MCF 10A (cell line): ENCODE measurements at regions of chr5 and their contacts with region 1.

Region 1: GRCh38 chr5:168047043-168047668 is 244.3 kb upstream of the WWC1 start:
- DNase-seq: peak; percentile 89
- H3K4me3 Mint-ChIP-seq: no peak overlapping the region
- H3K27ac Mint-ChIP-seq: no peak overlapping the region
- H3K4me1 Mint-ChIP-seq: peaks cover 11% of the 10 kb centered on the region
- H3K27me3 Mint-ChIP-seq: peaks cover 34% of the 10 kb centered on the region
- CTCF ChIP-seq: peak; percentile 88

Region 2: DNA sequence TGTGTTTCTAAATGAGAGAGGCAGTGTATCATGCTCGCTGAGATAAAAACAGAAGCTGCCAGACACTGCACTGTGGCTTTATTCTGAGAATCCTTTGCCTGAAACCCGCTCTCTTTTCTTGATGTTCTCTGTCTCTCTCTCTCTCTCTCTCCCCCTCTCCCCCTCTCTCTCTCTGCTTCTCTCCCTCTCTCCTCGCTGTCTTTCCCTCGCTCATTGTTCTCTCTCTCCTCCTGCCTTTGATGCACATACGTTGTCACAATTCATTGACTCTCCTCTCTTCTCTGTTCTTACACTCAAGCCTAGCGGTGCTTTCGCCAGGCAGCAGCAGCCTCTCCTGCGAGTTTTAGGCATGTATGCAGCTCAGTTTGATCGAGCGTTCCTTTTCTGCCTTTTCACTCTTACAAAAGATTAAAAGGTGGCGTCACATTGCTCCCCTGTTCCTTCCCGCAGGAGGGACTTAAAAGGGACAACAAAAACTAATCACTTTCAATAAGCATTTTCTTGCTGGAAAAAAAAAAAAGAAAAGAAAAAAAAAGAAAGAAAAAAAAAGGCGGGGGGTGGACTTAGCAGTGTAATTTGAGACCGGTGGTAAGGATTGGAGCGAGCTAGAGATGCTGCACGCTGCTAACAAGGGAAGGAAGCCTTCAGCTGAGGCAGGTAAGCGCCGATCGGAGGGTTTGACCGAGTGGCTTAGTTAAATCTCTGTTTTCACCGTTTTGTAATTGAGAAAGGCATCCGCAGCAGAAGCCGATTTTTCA is 473.6 kb before region 1 on chr5:
- CTCF ChIA-PET with region 1: interaction called, 90 read pairs
- POLR2A ChIA-PET with region 1: interaction called, 5 read pairs
- intact Hi-C with region 1: no loop called
- DNase-seq: peak; percentile 79
- H3K4me3 Mint-ChIP-seq: peak overlapping the region; percentile 50
- H3K27ac Mint-ChIP-seq: no peak overlapping the region
- H3K4me1 Mint-ChIP-seq: peaks cover 26% of the 10 kb centered on the region
- H3K27me3 Mint-ChIP-seq: peaks cover 88% of the 10 kb centered on the region
- CTCF ChIP-seq: no peak

Region 3: GRCh38 chr5:167587772-167588437 is 459.3 kb before region 1 on chr5:
- CTCF ChIA-PET with region 1: interaction called, 57 read pairs
- POLR2A ChIA-PET with region 1: no interaction called
- intact Hi-C with region 1: no loop called
- DNase-seq: peak; percentile 78
- H3K4me3 Mint-ChIP-seq: no peak overlapping the region
- H3K27ac Mint-ChIP-seq: no peak overlapping the region
- H3K4me1 Mint-ChIP-seq: peaks cover 10% of the 10 kb centered on the region
- H3K27me3 Mint-ChIP-seq: no peaks in the 10 kb centered on the region
- CTCF ChIP-seq: peak; percentile 65

Region 4: GRCh38 chr5:167723254-167723871 is 323.8 kb before region 1 on chr5:
- CTCF ChIA-PET with region 1: interaction called, 34 read pairs
- POLR2A ChIA-PET with region 1: interaction called, 4 read pairs
- intact Hi-C with region 1: loop called (anchors 1 kb)
- DNase-seq: peak; percentile 94
- H3K4me3 Mint-ChIP-seq: no peak overlapping the region
- H3K27ac Mint-ChIP-seq: peak overlapping the region; percentile 1
- H3K4me1 Mint-ChIP-seq: peaks cover 9% of the 10 kb centered on the region
- H3K27me3 Mint-ChIP-seq: no peaks in the 10 kb centered on the region
- CTCF ChIP-seq: peak; percentile 93

Region 5: DNA sequence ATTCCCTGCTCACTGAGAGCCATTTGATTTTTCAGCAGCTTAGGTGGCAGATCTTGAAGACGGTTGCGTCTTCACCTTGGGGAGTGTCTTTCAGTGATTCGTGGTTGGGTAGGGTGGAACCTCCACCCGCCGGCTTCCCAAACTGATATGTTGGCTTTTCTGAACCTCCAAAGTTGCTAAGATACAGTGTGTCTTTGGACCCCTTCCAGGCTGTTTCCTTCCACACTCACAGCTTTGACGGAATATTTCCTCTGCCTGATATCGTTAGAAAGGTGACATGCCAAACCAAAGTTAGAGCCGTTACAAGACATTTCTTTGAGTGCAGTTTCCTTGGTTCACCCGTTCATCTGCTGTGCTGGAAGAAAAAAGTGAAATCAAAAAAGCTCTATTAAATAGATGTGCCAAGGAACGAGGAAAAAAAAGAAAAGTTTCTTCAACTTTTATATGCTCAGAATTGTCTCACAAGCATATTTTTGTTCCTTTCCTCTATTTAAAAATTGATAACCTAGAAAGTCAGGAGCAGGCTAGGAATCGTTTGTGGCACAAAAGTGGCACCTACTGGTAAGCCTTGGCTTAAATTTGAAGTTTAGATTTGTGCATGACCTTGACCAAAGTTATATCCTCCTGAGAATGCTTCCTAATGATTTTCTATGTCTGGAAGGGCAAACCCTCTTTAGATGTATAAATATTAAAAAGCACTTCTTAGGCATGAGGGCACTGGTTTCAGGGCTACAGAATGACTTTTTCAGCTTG is 26.4 kb before region 1 on chr5:
- CTCF ChIA-PET with region 1: interaction called, 11 read pairs
- POLR2A ChIA-PET with region 1: no interaction called
- intact Hi-C with region 1: no loop called
- DNase-seq: peak; percentile 31
- H3K4me3 Mint-ChIP-seq: no peak overlapping the region
- H3K27ac Mint-ChIP-seq: no peak overlapping the region
- H3K4me1 Mint-ChIP-seq: no peaks in the 10 kb centered on the region
- H3K27me3 Mint-ChIP-seq: no peaks in the 10 kb centered on the region
- CTCF ChIP-seq: peak; percentile 59

Region 6: GRCh38 chr5:168057905-168058304 is 10.7 kb after region 1 on chr5:
- CTCF ChIA-PET with region 1: interaction called, 40 read pairs
- POLR2A ChIA-PET with region 1: no interaction called
- intact Hi-C with region 1: no loop called
- DNase-seq: peak; percentile 33
- H3K4me3 Mint-ChIP-seq: no peak overlapping the region
- H3K27ac Mint-ChIP-seq: no peak overlapping the region
- H3K4me1 Mint-ChIP-seq: peaks cover 6% of the 10 kb centered on the region
- H3K27me3 Mint-ChIP-seq: no peaks in the 10 kb centered on the region
- CTCF ChIP-seq: no peak